ENCODE measurements at regions of chr12 and their contacts with region 1.

Region 1: GRCh38 chr12:32671930-32672780 is 6.9 kb upstream of the DNM1L start:
- DNase-seq: peak; percentile 79
- H3K4me3 Mint-ChIP-seq: no peak overlapping the region
- H3K27ac Mint-ChIP-seq: no peak overlapping the region
- H3K4me1 Mint-ChIP-seq: no peaks in the 10 kb centered on the region
- H3K27me3 Mint-ChIP-seq: peaks cover 6% of the 10 kb centered on the region

Region 2: DNA sequence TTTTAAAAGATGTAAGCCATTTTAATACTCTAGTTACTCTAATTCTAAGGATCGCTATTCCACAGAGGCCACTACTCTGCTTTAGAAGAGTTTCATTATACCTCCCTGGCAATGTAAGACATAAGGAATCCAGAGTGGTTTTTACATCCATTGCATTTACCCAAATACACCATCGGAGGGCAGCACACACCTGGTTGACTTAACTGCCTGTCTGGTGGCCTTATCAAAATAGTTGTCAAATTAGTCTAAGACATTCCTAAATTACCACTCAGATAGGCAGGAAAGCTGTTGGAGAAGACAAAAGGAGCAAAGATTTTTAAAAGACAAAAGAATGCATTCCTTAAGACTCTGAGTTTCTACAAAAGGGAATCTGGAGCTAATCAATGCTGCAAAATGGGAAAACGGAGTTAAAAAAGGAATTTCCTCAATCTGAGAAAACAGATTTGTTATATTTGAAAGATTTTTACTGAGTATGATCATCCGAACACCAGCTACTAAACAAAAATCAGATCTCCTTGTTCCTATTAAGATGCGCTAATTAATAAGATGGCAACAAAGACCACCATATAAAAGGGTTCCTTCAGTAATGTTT is 306.6 kb before region 1 on chr12:
- intact Hi-C with region 1: loop called (anchors 1 kb)
- DNase-seq: peak; percentile 81
- H3K4me3 Mint-ChIP-seq: no peak overlapping the region
- H3K27ac Mint-ChIP-seq: no peak overlapping the region
- H3K4me1 Mint-ChIP-seq: no peaks in the 10 kb centered on the region
- H3K27me3 Mint-ChIP-seq: no peaks in the 10 kb centered on the region

Region 3: DNA sequence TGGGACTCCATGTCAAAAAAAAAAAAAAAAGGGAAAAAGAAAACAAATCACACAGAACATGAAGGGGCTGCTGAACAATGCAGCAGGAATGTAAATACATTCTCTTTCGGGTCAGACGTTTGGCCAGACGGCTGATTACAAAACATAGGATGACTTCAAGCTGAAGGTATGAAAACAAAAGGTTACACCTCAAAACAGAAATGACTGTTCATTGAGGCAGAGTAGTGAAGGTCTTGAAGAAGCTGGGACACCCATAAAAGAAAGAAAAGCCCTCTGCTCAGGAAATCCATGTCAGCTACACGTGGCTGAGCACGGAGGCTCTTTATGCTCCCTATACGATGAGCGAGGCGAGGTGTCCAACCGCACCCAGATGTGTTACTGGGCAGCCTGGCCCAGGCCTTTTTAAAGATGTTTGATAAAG is 235.1 kb before region 1 on chr12:
- intact Hi-C with region 1: no loop called
- DNase-seq: no peak
- H3K4me3 Mint-ChIP-seq: no peak overlapping the region
- H3K27ac Mint-ChIP-seq: no peak overlapping the region
- H3K4me1 Mint-ChIP-seq: no peaks in the 10 kb centered on the region
- H3K27me3 Mint-ChIP-seq: peaks cover 3% of the 10 kb centered on the region

Measured in activated CD4-positive, alpha-beta T cell treated with anti-CD3 and anti-CD28 coated beads, Interleukin-2, amount 10 ng/mL, durations not matched to agents 24 days and 14 days (primary cell).